GM12878 (cell line): ENCODE measurements at regions of chr7 and their contacts with region 1.

Region 1: DNA sequence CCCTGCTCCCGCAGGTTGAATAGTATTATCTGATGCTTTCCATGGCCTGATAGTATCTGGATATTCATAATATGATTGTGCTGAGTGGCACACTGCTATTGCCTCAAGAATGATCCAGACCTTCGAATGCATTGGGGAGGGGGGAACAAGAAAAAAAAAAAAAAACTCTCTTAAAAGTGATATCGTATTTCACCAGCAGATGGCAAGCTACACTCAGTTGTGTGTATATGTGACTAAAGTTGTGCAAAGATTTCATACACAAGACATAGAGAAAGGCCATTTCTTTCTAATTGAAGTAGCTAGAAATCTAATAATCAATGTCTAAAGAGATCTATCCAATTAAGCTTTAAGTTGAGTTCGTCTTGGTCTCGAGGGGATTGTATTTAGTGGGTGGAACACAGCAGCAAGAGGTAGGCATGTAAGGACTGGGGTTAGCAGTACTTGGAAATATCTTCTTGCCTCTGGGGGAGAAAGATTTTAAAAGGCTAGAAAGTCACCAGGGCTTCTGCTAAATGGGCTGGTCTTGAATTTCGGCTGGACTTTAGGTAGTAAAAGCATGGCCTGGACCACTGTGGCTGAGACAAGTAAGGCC is 15.3 kb downstream of the SFRP4 start:
- DNase-seq: no peak
- ATAC-seq: peak; percentile 78
- H3K4me3 ChIP-seq: no peak overlapping the region
- H3K27ac ChIP-seq: no peak overlapping the region
- H3K4me1 ChIP-seq: no peaks in the 10 kb centered on the region
- H3K27me3 ChIP-seq: peaks cover 0 to 2% of the 10 kb centered on the region in 2 experiments; a peak in 1 of 4 replicates
- CTCF ChIP-seq: peak; percentile 47 to 59 (median 50); a peak in 5 of 6 replicates
- EP300 ChIP-seq: no peak
- POLR2A ChIP-seq: no peak
- RAD21 ChIP-seq: peak; percentile 64

Region 2: GRCh38 chr7:38040831-38041230 is 139.5 kb after region 1 on chr7:
- CTCF ChIA-PET with region 1: interaction called, 6 read pairs
- POLR2A ChIA-PET with region 1: no interaction called
- RAD21 ChIA-PET with region 1: interaction called, 14 read pairs
- SMC1A ChIA-PET with region 1: interaction called, 4 read pairs
- in situ Hi-C with region 1: no loop called
- intact Hi-C with region 1: no loop called
- DNase-seq: no peak
- ATAC-seq: peak; percentile 63
- H3K4me3 ChIP-seq: no peak overlapping the region
- H3K27ac ChIP-seq: no peak overlapping the region
- H3K4me1 ChIP-seq: no peaks in the 10 kb centered on the region
- H3K27me3 ChIP-seq: 0 out of 4 replicates have a peak, but pooled peaks cover 0 to 2% of the 10 kb centered on the region in 2 experiments
- CTCF ChIP-seq: no peak
- EP300 ChIP-seq: no peak
- POLR2A ChIP-seq: no peak
- RAD21 ChIP-seq: no peak

Region 3: GRCh38 chr7:38086857-38087256 is 185.5 kb after region 1 on chr7:
- CTCF ChIA-PET with region 1: interaction called, 12 read pairs
- POLR2A ChIA-PET with region 1: no interaction called
- RAD21 ChIA-PET with region 1: no interaction called
- SMC1A ChIA-PET with region 1: interaction called, 3 read pairs
- in situ Hi-C with region 1: no loop called
- intact Hi-C with region 1: no loop called
- DNase-seq: no peak
- ATAC-seq: no peak
- H3K4me3 ChIP-seq: no peak overlapping the region
- H3K27ac ChIP-seq: no peak overlapping the region
- H3K4me1 ChIP-seq: no peaks in the 10 kb centered on the region
- H3K27me3 ChIP-seq: no peaks in the 10 kb centered on the region
- CTCF ChIP-seq: no peak
- EP300 ChIP-seq: no peak
- POLR2A ChIP-seq: no peak
- RAD21 ChIP-seq: no peak

Region 4: DNA sequence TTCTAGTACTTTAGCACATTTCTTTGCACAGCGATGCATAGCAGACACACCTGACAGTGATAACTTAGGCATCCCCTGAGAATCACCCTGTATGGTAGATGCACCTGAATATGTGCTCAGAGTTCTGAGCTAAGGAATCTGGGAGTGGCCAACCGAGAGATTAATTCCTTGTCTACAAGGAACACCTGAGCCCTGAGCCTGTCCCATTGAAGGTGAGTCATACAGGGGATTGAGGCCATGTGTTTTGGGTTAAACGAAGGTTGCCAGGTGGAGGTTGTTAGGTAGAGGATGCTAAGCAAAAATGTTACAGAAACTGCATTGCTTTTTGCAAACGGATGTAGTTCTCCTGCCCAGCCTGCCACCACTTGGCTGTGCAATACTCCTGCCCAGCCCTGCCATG is 601.0 kb after region 1 on chr7:
- CTCF ChIA-PET with region 1: no interaction called
- POLR2A ChIA-PET with region 1: no interaction called
- RAD21 ChIA-PET with region 1: no interaction called
- SMC1A ChIA-PET with region 1: no interaction called
- in situ Hi-C with region 1: no loop called
- intact Hi-C with region 1: no loop called
- DNase-seq: no peak
- ATAC-seq: no peak
- H3K4me3 ChIP-seq: no peak overlapping the region
- H3K27ac ChIP-seq: no peak overlapping the region
- H3K4me1 ChIP-seq: no peaks in the 10 kb centered on the region
- H3K27me3 ChIP-seq: no peaks in the 10 kb centered on the region; a peak in 1 of 4 replicates
- CTCF ChIP-seq: no peak
- EP300 ChIP-seq: no peak
- POLR2A ChIP-seq: no peak
- RAD21 ChIP-seq: no peak